H1 (cell line): ENCODE measurements at regions of chr16 and their contacts with region 1.

Region 1: GRCh38 chr16:23510164-23510914 is at the start of gene GGA2:
- DNase-seq: peak in 1 of 2 experiments; percentile 87
- H3K4me3 ChIP-seq: peak within 1 kb of the TSS; percentile 55 to 99 (median 74)
- H3K27ac ChIP-seq: peak within 1 kb of the TSS; percentile 89
- H3K4me1 ChIP-seq: peaks cover 0 to 9% (median 2%) of the 10 kb centered on the region in 4 experiments; a peak in 4 of 7 replicates
- H3K27me3 ChIP-seq: no peaks in the 10 kb centered on the region
- CTCF ChIP-seq: no peak
- EP300 ChIP-seq: no peak
- POLR2A ChIP-seq: peak; percentile 96 to 99
- RAD21 ChIP-seq: no peak
- total RNA-seq, gene GGA2: 114 and 116 TPM in 2 replicates

Region 2: GRCh38 chr16:23496826-23497542 is 13.4 kb before region 1 on chr16:
- CTCF ChIA-PET with region 1: no interaction called
- POLR2A ChIA-PET with region 1: interaction called, 63 read pairs
- DNase-seq: no peak
- H3K4me3 ChIP-seq: no peak overlapping the region
- H3K27ac ChIP-seq: no peak overlapping the region
- H3K4me1 ChIP-seq: peaks cover 0 to 6% (median 3%) of the 10 kb centered on the region in 4 experiments; a peak in 4 of 7 replicates
- H3K27me3 ChIP-seq: no peaks in the 10 kb centered on the region
- CTCF ChIP-seq: no peak
- EP300 ChIP-seq: no peak
- POLR2A ChIP-seq: no peak
- RAD21 ChIP-seq: no peak

Region 3: GRCh38 chr16:23523321-23523720 is 13.0 kb after region 1 on chr16:
- CTCF ChIA-PET with region 1: interaction called, 5 read pairs
- POLR2A ChIA-PET with region 1: interaction called, 15 read pairs
- DNase-seq: no peak
- H3K4me3 ChIP-seq: no peak overlapping the region
- H3K27ac ChIP-seq: no peak overlapping the region
- H3K4me1 ChIP-seq: no peaks in the 10 kb centered on the region
- H3K27me3 ChIP-seq: no peaks in the 10 kb centered on the region; a peak in 1 of 7 replicates
- CTCF ChIP-seq: no peak
- EP300 ChIP-seq: no peak
- POLR2A ChIP-seq: no peak
- RAD21 ChIP-seq: no peak